GM12878 (cell line): ENCODE measurements at regions of chr3 and their contacts with region 1.

Region 1: DNA sequence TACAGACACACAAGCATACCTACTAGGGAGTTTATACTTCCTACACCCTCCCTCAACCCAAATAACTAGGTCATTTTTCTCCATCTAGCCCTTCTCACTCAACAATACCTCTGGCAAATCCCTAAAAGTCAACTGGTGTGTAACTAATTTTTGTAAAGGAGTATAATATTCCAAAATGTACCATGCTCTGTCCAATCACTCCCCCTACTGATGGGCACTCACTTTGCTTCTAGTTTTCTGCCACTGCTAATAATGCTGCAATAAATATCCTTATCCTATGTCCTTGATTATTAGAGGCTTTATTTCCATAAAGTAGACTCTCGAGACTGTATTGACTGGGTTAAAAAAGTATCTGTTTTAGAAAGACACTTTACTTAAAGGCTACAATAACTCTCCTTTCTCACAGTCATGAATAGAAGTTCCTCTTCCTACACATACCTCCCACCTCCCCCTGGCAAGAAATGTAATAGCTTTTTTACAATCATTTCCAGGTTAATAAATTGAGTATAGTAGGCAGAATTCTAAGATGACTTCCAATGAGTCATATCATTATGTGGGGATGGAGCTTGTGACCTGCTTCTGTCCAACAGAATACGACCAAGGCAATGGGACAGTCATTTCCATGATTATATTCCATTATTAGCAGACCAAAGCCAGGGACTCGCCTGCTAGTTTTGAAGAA is 30.0 kb downstream of the SHQ1 start:
- DNase-seq: no peak
- ATAC-seq: no peak
- H3K4me3 ChIP-seq: no peak overlapping the region
- H3K27ac ChIP-seq: 0 out of 2 replicates have a peak overlapping the region, but pooled peaks have one; percentile 13
- H3K4me1 ChIP-seq: peaks cover 47% of the 10 kb centered on the region
- H3K27me3 ChIP-seq: no peaks in the 10 kb centered on the region
- CTCF ChIP-seq: peak; percentile 43 to 74 (median 53)
- EP300 ChIP-seq: no peak
- POLR2A ChIP-seq: no peak
- RAD21 ChIP-seq: peak; percentile 77

Region 2: GRCh38 chr3:71725279-71725991 is 1092.8 kb before region 1 on chr3 and contains the start of gene EIF4E3:
- CTCF ChIA-PET with region 1: interaction called, 29 read pairs
- POLR2A ChIA-PET with region 1: no interaction called
- RAD21 ChIA-PET with region 1: interaction called, 4 read pairs
- SMC1A ChIA-PET with region 1: interaction called, 5 read pairs
- in situ Hi-C with region 1: loop called (anchors 5 kb)
- intact Hi-C with region 1: loop called (anchors 5 kb)
- DNase-seq: no peak
- ATAC-seq: no peak
- H3K4me3 ChIP-seq: peak within 1 kb of the TSS; percentile 60; the same call in 1 of the 2 replicates
- H3K27ac ChIP-seq: no peak within 1 kb of the TSS
- H3K4me1 ChIP-seq: peaks cover 10% of the 10 kb centered on the region
- H3K27me3 ChIP-seq: peaks cover 9 to 12% of the 10 kb centered on the region in 2 experiments
- CTCF ChIP-seq: no peak
- EP300 ChIP-seq: no peak
- POLR2A ChIP-seq: no peak
- RAD21 ChIP-seq: no peak
- polyA plus RNA-seq, gene EIF4E3: 0.05 to 0.18 TPM

Region 3: DNA sequence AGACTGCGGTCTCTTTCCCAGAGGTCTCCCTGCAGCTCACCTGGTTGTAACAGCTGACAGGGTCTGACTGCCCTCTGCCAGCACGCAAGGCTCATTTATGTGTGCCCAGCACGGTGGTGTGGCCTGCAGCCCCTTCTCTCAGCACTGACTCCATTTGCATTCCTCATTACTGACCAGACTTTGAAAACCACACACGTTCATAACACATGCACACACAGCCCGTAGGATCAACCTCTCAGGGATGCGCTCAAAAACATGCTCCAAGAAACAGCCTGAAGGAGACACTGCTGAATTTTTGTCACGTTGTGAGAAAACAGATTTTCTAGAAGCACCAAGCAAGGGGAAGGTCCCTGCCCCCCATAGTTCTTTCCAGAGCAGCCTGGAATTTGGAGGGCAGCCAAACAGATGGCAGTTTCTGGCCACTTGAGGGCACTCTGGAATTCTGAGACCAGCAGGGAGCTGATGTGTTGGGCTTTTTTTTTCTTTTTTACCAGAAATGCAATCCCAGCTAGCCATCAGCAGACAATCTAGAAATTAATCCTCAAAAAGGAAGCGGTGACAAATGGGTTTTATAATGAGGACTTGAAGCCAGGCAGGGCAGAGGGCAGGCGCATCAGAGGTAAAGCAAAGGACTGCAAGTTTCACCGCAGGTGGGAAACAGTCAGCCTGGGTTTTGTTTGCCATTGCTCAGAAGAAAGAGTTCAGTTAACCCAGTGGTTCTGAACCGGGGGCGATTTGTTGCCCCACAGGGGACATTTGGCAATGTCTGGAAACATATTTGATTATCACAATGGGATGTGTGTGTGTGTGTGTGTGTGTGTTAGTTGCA is 862.8 kb before region 1 on chr3:
- CTCF ChIA-PET with region 1: interaction called, 7 read pairs
- POLR2A ChIA-PET with region 1: no interaction called
- RAD21 ChIA-PET with region 1: interaction called, 8 read pairs
- SMC1A ChIA-PET with region 1: interaction called, 13 read pairs
- in situ Hi-C with region 1: no loop called
- intact Hi-C with region 1: loop called (anchors 1 kb)
- DNase-seq: peak; percentile 61
- ATAC-seq: peak; percentile 81
- H3K4me3 ChIP-seq: no peak overlapping the region
- H3K27ac ChIP-seq: no peak overlapping the region
- H3K4me1 ChIP-seq: peaks cover 22% of the 10 kb centered on the region
- H3K27me3 ChIP-seq: no peaks in the 10 kb centered on the region
- CTCF ChIP-seq: peak; percentile 46 to 81 (median 67); a peak in 5 of 6 replicates
- EP300 ChIP-seq: no peak
- POLR2A ChIP-seq: no peak
- RAD21 ChIP-seq: peak; percentile 85

Region 4: DNA sequence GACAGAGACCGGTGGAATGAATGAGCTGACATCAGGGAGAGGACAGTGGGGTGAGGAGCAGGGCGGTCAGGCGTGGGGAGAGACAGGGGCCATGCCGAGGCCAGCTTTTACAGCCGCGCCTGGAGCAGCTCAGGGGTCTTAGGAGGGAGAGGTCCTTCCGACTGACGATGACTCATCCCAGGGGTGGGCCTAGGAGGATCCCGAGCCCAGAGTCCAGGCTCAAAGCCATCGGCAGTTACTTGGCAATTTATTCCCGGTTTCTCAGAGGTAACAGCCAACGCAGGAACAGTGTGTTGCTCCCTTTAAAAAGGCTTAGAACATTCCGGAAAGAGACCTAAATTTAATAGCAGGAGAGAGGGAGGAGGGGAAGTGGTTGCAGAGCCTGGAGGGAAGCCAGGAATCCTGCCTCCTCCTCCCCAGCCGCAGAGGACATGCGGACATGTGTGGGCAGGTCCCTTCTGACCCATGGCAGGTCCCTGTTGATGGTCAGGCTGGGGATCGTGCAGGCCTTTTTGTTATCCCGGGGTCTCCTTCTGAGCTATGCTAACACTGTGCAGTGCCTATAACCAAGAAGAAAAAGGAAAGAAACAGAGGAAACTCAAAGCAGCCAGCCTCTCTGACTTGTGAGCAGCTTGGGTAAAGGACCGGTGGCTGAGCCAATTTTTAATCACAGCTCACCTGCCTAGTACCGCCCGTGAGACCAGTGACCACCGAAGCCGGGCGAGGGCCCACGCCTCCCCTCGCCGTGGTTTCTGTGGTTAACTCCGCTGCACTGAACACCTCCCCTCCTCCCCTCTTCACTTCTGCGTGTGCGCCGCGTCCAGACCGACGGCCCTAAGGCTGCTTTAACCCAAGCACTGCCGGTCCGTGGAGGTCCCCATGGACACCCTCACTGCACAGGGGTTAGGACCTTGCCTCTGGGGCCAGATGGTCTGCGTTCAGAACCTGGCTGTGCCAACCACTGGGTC is 640.9 kb before region 1 on chr3:
- CTCF ChIA-PET with region 1: no interaction called
- POLR2A ChIA-PET with region 1: no interaction called
- RAD21 ChIA-PET with region 1: no interaction called
- SMC1A ChIA-PET with region 1: no interaction called
- in situ Hi-C with region 1: no loop called
- intact Hi-C with region 1: loop called (anchors 5 kb)
- DNase-seq: no peak
- ATAC-seq: peak; percentile 64
- H3K4me3 ChIP-seq: peak overlapping the region; percentile 39
- H3K27ac ChIP-seq: peak overlapping the region; percentile 85
- H3K4me1 ChIP-seq: peaks cover 29% of the 10 kb centered on the region
- H3K27me3 ChIP-seq: no peaks in the 10 kb centered on the region
- CTCF ChIP-seq: no peak
- EP300 ChIP-seq: peak; percentile 21 to 40; a peak in 2 of 4 replicates
- POLR2A ChIP-seq: no peak
- RAD21 ChIP-seq: no peak

Region 5: DNA sequence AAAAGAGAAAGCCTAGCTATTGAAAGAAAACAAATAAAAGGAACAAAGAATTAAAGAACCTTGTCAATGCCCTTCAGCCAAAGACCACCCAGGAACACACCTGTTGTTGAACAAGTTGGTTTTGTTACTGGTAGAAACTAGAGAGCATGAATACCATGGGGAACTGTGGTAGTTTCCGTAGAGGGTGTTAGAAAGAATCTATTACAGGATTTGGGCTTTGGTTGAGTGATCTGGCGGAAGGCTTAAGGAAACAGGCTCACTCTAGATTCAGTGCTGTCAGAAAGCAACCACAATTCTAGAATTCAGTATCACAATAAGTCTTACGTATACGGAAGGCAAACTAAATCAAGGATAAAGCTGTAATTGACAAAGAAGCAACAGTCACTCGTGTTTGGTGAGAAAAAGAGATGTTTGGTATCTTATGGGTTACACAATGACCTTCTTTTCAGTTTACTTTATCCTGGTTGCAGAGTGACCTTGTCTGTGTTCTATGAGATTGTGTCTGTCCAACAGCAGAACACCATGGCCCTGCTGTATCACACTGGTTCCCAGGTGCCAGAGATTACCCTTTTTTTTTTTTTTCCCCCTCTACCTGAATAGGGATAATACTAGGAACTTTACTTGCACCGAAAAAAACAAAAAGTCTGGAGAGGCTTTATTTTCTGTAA is 235.9 kb before region 1 on chr3:
- CTCF ChIA-PET with region 1: interaction called, 3 read pairs
- POLR2A ChIA-PET with region 1: no interaction called
- RAD21 ChIA-PET with region 1: no interaction called
- SMC1A ChIA-PET with region 1: interaction called, 6 read pairs
- in situ Hi-C with region 1: no loop called
- intact Hi-C with region 1: loop called (anchors 10 kb)
- DNase-seq: peak; percentile 76
- ATAC-seq: peak; percentile 98
- H3K4me3 ChIP-seq: no peak overlapping the region
- H3K27ac ChIP-seq: no peak overlapping the region
- H3K4me1 ChIP-seq: peaks cover 7% of the 10 kb centered on the region
- H3K27me3 ChIP-seq: no peaks in the 10 kb centered on the region
- CTCF ChIP-seq: no peak
- EP300 ChIP-seq: peak; percentile 66 to 76; a peak in 3 of 4 replicates
- POLR2A ChIP-seq: no peak
- RAD21 ChIP-seq: 0 out of 2 replicates have a peak, but pooled peaks have one; percentile 6

Region 6: DNA sequence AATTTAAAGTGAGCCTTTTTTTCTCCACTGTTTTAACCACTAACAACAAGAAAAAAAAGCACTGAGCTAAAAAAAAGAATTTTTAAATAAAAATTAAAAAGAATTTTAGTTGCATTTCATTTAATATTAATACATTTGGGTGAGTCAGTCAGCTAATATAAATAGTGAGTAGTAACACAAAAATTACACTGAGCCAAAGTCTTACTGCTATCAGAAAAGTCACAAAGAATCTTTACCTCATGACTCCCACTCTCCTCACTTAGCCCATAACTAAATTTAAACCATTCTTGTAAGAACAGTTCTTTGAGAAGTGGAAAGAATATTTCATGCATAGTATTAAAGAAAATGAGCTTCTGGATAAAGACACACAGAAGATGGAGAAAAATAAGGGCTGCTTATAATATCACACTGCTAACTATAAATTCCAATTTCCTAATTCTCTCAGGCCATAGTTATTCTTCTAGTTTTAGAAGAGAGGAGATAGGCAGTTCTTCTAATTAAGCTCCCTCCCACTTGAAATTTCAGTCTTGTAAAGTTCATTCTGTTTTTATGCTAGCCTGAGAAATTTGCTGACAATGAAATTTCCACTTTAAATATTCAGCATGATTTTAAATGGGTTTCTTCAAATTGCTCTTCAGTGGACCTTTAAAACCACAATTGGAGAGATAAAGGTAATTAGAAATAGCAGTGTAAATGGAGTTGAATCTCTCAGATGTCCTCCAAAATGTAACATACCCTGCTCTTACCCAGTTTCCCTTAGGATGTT is 12.4 kb after region 1 on chr3:
- CTCF ChIA-PET with region 1: interaction called, 30 read pairs
- POLR2A ChIA-PET with region 1: no interaction called
- RAD21 ChIA-PET with region 1: interaction called, 15 read pairs
- SMC1A ChIA-PET with region 1: interaction called, 14 read pairs
- in situ Hi-C with region 1: no loop called
- intact Hi-C with region 1: no loop called
- DNase-seq: no peak
- ATAC-seq: no peak
- H3K4me3 ChIP-seq: no peak overlapping the region
- H3K27ac ChIP-seq: no peak overlapping the region
- H3K4me1 ChIP-seq: no peaks in the 10 kb centered on the region
- H3K27me3 ChIP-seq: no peaks in the 10 kb centered on the region
- CTCF ChIP-seq: no peak
- EP300 ChIP-seq: no peak
- POLR2A ChIP-seq: no peak
- RAD21 ChIP-seq: no peak